Head of caudate nucleus (tissue), 42 donors: ENCODE measurements at regions of chr7 and their contacts with region 1.

Region 1: GRCh38 chr7:121081327-121081936 is 92.9 kb downstream of the CPED1 start:
- DNase-seq: peak in 4 of 42 donors; percentile 2 to 33 (median 8)

Region 2: GRCh38 chr7:120805636-120806388 is 275.6 kb before region 1 on chr7:
- intact Hi-C with region 1: loop called (anchors 10 kb)
- DNase-seq: peak in 36 of 42 donors; percentile 7 to 85 (median 54)

Region 3: DNA sequence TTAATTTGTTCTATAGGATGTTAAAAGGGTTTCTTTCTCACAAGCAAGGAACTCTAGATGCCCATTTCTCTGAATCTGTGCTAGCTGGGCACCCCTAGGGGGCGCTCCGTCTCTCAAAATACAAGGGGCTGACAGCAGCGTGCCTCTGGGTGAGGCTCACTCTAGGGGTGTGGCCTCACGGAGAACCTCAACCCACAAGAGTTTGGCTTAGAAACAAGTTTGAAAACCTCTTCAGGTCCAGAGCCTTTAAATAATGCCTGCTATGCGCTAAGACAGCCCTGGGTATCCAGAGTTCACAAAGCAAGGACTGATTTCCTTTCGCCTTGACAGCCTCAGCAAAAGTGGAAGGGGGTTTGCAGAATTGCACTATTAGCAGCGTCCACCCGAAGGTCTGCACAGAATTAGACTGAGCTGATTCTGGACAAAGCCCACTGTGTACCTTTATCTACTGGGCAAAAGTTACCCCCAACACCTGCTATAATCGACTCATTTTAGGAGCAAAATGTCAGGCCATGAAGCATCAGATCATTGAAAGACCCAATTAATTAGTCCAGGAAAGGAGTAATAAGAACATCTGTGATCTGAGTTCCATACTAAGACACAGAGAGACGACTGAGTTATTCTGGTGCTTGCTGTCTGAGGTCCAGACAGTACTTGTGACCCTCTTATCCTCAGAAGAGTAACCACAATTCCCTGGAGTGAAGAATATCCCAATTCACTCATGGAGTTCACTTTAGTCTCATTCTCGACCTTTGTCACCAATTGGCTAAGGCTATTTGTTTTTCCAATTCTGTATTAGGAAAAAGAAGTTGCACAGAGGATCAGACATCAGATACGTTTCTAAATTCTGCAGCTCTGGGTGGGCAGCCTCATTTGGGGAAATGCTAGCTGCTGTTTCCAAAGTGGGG is 93.5 kb before region 1 on chr7:
- intact Hi-C with region 1: loop called (anchors 5 kb)
- DNase-seq: peak; percentile 69 to 94 (median 84)

Region 4: GRCh38 chr7:122067077-122067476 is 985.6 kb after region 1 on chr7:
- intact Hi-C with region 1: no loop called
- DNase-seq: no peak